ENCODE measurements at regions of chr13 and their contacts with region 1.

Region 1: DNA sequence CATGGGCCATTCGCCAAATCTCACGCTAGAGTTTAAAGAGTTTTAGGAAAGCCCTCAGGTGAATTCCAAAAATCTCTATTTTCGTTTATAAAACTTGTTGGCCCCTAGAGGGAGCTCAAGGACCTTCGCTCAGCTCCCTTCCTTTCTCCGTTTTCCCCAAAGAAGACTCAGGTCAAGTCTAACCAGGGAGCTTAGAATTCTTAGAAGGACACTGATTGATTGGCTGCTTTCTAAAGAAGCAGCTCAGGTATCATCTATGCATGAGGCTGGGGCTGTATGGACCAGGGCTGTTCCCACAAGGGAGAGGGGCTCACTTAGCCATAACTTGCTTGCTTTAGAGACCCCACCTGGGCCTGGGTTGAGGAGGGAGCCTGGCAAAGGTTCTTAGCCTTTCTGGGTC is 20.5 kb downstream of the DZIP1 start:
- DNase-seq: peak; percentile 43
- ATAC-seq: no peak
- H3K4me3 ChIP-seq: no peak overlapping the region
- H3K4me3 Mint-ChIP-seq: no peak overlapping the region
- H3K27ac ChIP-seq: no peak overlapping the region
- H3K27ac Mint-ChIP-seq: no peak overlapping the region
- H3K4me1 ChIP-seq: no peaks in the 10 kb centered on the region
- H3K4me1 Mint-ChIP-seq: no peaks in the 10 kb centered on the region
- H3K27me3 ChIP-seq: peaks cover 0 to 6% (median 2%) of the 10 kb centered on the region in 4 experiments
- H3K27me3 Mint-ChIP-seq: peaks cover 13% of the 10 kb centered on the region
- CTCF ChIP-seq: peak; percentile 72

Region 2: GRCh38 chr13:95367309-95367843 is 256.6 kb before region 1 on chr13:
- CTCF ChIA-PET with region 1: no interaction called
- POLR2A ChIA-PET with region 1: no interaction called
- intact Hi-C with region 1: no loop called
- DNase-seq: no peak
- ATAC-seq: no peak
- H3K4me3 ChIP-seq: no peak overlapping the region
- H3K4me3 Mint-ChIP-seq: no peak overlapping the region
- H3K27ac ChIP-seq: no peak overlapping the region
- H3K27ac Mint-ChIP-seq: no peak overlapping the region
- H3K4me1 ChIP-seq: no peaks in the 10 kb centered on the region
- H3K4me1 Mint-ChIP-seq: no peaks in the 10 kb centered on the region
- H3K27me3 ChIP-seq: peaks cover 0 to 3% (median 1%) of the 10 kb centered on the region in 4 experiments
- H3K27me3 Mint-ChIP-seq: peaks cover 9% of the 10 kb centered on the region
- CTCF ChIP-seq: no peak

Region 3: DNA sequence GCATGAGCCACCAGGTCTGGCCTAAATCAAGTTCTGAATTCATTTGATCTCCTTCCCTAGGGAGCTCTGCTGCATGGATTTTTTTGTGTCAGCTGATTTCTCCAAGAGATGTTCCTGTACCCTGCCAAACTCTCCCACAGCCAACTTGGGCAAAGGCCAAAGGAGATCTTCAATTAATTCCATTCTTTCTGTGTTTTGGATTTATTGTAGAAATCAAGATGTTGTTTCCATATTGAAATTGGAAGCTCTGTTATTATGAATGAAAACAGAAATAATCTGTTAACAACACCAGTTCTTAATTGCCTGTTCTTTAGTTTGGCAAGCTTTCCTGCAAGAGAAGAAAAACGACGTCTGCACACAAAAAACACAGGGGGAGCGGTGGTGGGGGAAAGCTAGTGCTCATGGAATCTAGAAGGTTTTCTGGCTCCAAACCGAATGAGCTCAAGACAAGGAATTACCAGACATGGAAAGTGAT is 236.2 kb before region 1 on chr13:
- CTCF ChIA-PET with region 1: no interaction called
- POLR2A ChIA-PET with region 1: no interaction called
- intact Hi-C with region 1: no loop called
- DNase-seq: no peak
- ATAC-seq: no peak
- H3K4me3 ChIP-seq: no peak overlapping the region
- H3K4me3 Mint-ChIP-seq: no peak overlapping the region
- H3K27ac ChIP-seq: no peak overlapping the region
- H3K27ac Mint-ChIP-seq: no peak overlapping the region
- H3K4me1 ChIP-seq: peaks cover 17 to 23% of the 10 kb centered on the region in 2 donors
- H3K4me1 Mint-ChIP-seq: peaks cover 24% of the 10 kb centered on the region
- H3K27me3 ChIP-seq: peaks cover 0 to 59% (median 40%) of the 10 kb centered on the region in 4 experiments
- H3K27me3 Mint-ChIP-seq: peaks cover 62% of the 10 kb centered on the region
- CTCF ChIP-seq: no peak

Region 4: GRCh38 chr13:95579303-95579702 is 44.7 kb before region 1 on chr13:
- CTCF ChIA-PET with region 1: no interaction called
- POLR2A ChIA-PET with region 1: no interaction called
- intact Hi-C with region 1: no loop called
- DNase-seq: no peak
- ATAC-seq: no peak
- H3K4me3 ChIP-seq: no peak overlapping the region
- H3K4me3 Mint-ChIP-seq: no peak overlapping the region
- H3K27ac ChIP-seq: no peak overlapping the region
- H3K27ac Mint-ChIP-seq: no peak overlapping the region
- H3K4me1 ChIP-seq: no peaks in the 10 kb centered on the region
- H3K4me1 Mint-ChIP-seq: no peaks in the 10 kb centered on the region
- H3K27me3 ChIP-seq: no peaks in the 10 kb centered on the region
- H3K27me3 Mint-ChIP-seq: peaks cover 22% of the 10 kb centered on the region
- CTCF ChIP-seq: no peak

Region 5: GRCh38 chr13:95596701-95597100 is 27.3 kb before region 1 on chr13:
- CTCF ChIA-PET with region 1: no interaction called
- POLR2A ChIA-PET with region 1: no interaction called
- intact Hi-C with region 1: no loop called
- DNase-seq: no peak
- ATAC-seq: no peak
- H3K4me3 ChIP-seq: no peak overlapping the region
- H3K4me3 Mint-ChIP-seq: no peak overlapping the region
- H3K27ac ChIP-seq: no peak overlapping the region
- H3K27ac Mint-ChIP-seq: no peak overlapping the region
- H3K4me1 ChIP-seq: no peaks in the 10 kb centered on the region
- H3K4me1 Mint-ChIP-seq: no peaks in the 10 kb centered on the region
- H3K27me3 ChIP-seq: peaks cover 0 to 4% (median 4%) of the 10 kb centered on the region in 4 experiments
- H3K27me3 Mint-ChIP-seq: peaks cover under 1% of the 10 kb centered on the region
- CTCF ChIP-seq: no peak

Region 6: DNA sequence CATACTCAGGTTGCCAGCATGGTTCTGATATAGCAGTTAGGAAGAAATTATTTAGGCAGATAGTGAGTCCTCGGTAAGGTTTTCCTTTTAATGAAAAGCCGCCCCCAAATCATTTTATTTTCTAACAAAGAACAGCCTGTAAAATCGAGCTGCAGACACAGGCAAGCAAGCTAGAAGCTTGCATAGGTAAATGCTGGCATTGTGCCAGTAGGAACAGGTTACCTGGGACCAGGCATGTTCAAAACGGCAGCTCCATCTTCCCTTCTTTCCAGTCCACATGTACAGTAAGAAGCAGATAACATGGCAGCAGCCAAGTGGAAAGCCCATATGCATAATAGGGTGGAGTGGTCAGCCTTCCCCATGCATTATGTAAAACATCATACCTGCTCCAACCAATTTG is 358.1 kb after region 1 on chr13:
- CTCF ChIA-PET with region 1: interaction called, 3 read pairs
- POLR2A ChIA-PET with region 1: no interaction called
- intact Hi-C with region 1: loop called (anchors 5 kb)
- DNase-seq: no peak
- ATAC-seq: no peak
- H3K4me3 ChIP-seq: no peak overlapping the region
- H3K4me3 Mint-ChIP-seq: no peak overlapping the region
- H3K27ac ChIP-seq: no peak overlapping the region
- H3K27ac Mint-ChIP-seq: no peak overlapping the region
- H3K4me1 ChIP-seq: no peaks in the 10 kb centered on the region
- H3K4me1 Mint-ChIP-seq: no peaks in the 10 kb centered on the region
- H3K27me3 ChIP-seq: no peaks in the 10 kb centered on the region
- H3K27me3 Mint-ChIP-seq: no peaks in the 10 kb centered on the region
- CTCF ChIP-seq: no peak